HepG2 (cell line): ENCODE measurements at regions of chr7 and their contacts with region 1.

Region 1: DNA sequence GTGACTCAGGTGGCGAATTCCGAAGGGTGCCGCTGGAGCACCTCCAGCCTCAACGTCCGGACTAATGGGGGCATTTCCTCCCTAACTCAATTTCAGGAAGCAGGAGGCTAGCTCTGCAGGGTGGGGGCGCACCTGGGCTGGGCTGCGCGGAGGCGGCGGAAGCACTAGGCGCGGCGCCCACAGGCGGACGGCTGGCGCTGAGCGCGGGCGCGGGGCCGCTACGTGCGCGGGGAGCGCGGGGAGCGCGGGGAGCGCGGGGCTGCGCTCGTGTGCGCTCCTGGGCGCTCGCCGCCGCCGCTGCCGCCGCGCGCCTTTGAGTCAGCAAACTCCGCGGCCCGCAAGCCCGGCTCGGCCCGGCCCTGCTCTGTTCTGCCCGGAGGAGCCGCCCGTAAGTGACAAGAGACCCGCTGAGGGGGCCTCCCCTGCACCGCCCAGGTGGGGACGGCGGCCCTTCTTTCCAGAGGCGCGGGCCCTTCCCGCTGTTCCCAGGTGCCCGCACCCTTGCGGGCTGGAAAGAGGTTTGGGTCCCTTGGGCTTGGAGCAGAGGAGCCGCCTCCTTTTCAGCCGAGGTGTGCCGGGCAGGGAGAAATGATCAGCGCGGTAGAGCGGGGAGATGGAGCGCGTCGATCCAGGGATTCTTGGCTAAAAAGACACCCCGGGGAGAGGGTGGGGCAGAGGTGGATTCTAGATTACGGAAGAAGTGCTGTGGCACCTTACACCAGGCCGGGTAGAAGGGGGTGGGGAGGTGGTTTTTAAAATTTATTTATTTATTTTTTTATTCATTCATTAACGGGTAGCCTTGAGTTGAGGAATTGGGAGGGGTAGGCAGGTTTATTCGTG is at the start of gene SNX10:
- DNase-seq: peak; percentile 59
- ATAC-seq: peak; percentile 95
- H3K4me3 ChIP-seq: peak within 1 kb of the TSS; percentile 90 to 96 (median 94)
- H3K27ac ChIP-seq: peak within 1 kb of the TSS; percentile 77
- H3K4me1 ChIP-seq: peaks cover 26% of the 10 kb centered on the region
- H3K27me3 ChIP-seq: peaks cover 0 to 3% of the 10 kb centered on the region in 2 experiments; a peak in 2 of 5 replicates
- CTCF ChIP-seq: peak; percentile 86
- EP300 ChIP-seq: no peak
- POLR2A ChIP-seq: no peak; a peak in 1 of 4 replicates
- RAD21 ChIP-seq: peak; percentile 79
- total RNA-seq, gene SNX10: 26.0 and 43.1 TPM in 2 replicates

Region 2: DNA sequence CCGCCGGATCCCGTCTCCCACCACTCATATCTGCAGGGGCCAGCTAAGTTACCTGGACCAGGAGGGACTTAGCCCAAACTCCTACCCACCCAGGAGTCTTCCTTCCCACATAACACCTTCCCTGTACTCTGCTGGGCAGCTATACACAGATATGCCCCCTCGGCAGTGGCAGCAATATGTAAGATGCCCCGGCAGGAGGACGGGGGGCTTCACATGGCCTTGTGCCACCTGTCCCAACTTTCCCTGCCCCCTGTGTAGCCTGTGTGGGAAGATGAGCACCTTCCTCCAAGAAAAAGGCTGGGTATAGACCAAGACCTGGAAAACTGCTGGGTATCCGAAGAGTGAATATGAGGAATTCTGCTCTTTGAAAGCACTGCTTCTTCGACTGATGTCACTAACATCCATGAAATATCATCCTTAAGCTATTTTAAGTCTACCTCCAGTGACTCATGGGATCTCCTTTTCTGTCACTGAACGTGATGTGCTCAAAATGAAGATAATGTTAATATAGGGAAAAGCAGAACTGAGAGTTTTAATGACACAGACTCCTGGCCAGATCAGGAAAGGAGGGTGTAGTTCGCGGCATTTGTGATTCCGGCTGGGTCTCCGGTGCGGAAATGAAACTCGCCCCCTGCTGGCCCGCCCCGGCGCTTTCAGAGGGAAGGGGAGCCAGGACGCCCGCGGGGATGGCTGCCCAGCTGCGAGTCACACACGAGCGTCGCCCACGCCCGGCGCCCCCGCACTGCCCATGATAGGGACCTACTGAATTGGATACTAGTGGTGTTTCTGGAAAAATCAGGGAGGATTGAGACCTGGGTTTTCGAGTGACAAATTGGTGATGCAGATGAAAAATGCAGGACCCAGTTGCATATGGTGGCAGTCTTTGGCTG is 396.8 kb before region 1 on chr7:
- CTCF ChIA-PET with region 1: no interaction called
- POLR2A ChIA-PET with region 1: no interaction called
- in situ Hi-C with region 1: loop called (anchors 25 kb)
- intact Hi-C with region 1: no loop called
- DNase-seq: no peak
- ATAC-seq: peak; percentile 76
- H3K4me3 ChIP-seq: no peak overlapping the region; a peak in 1 of 6 replicates
- H3K27ac ChIP-seq: no peak overlapping the region
- H3K4me1 ChIP-seq: peaks cover 21% of the 10 kb centered on the region
- H3K27me3 ChIP-seq: peaks cover 0 to under 1% of the 10 kb centered on the region in 2 experiments; a peak in 1 of 5 replicates
- CTCF ChIP-seq: peak; percentile 60
- EP300 ChIP-seq: no peak
- POLR2A ChIP-seq: no peak
- RAD21 ChIP-seq: 0 out of 2 replicates have a peak, but pooled peaks have one; percentile 10

Region 3: GRCh38 chr7:26305463-26306273 is 13.7 kb after region 1 on chr7:
- CTCF ChIA-PET with region 1: no interaction called
- POLR2A ChIA-PET with region 1: interaction called, 33 read pairs
- in situ Hi-C with region 1: no loop called
- intact Hi-C with region 1: no loop called
- DNase-seq: peak; percentile 83
- ATAC-seq: peak; percentile 79
- H3K4me3 ChIP-seq: peak overlapping the region in 2 of 3 experiments; percentile 15 to 22; a peak in 4 of 6 replicates
- H3K27ac ChIP-seq: peak overlapping the region; percentile 72
- H3K4me1 ChIP-seq: peaks cover 55% of the 10 kb centered on the region
- H3K27me3 ChIP-seq: no peaks in the 10 kb centered on the region
- CTCF ChIP-seq: no peak
- EP300 ChIP-seq: peak in 1 of 2 experiments; percentile 68; a peak in 1 of 4 replicates
- POLR2A ChIP-seq: peak in 1 of 2 experiments; percentile 35; a peak in 1 of 4 replicates
- RAD21 ChIP-seq: no peak

Region 4: GRCh38 chr7:26329520-26330255 is 37.8 kb after region 1 on chr7:
- CTCF ChIA-PET with region 1: no interaction called
- POLR2A ChIA-PET with region 1: no interaction called
- in situ Hi-C with region 1: no loop called
- intact Hi-C with region 1: no loop called
- DNase-seq: no peak
- ATAC-seq: no peak
- H3K4me3 ChIP-seq: no peak overlapping the region
- H3K27ac ChIP-seq: no peak overlapping the region
- H3K4me1 ChIP-seq: peaks cover 10% of the 10 kb centered on the region; the same call in 1 of the 2 replicates
- H3K27me3 ChIP-seq: no peaks in the 10 kb centered on the region
- CTCF ChIP-seq: no peak
- EP300 ChIP-seq: no peak
- POLR2A ChIP-seq: no peak
- RAD21 ChIP-seq: no peak

Region 5: DNA sequence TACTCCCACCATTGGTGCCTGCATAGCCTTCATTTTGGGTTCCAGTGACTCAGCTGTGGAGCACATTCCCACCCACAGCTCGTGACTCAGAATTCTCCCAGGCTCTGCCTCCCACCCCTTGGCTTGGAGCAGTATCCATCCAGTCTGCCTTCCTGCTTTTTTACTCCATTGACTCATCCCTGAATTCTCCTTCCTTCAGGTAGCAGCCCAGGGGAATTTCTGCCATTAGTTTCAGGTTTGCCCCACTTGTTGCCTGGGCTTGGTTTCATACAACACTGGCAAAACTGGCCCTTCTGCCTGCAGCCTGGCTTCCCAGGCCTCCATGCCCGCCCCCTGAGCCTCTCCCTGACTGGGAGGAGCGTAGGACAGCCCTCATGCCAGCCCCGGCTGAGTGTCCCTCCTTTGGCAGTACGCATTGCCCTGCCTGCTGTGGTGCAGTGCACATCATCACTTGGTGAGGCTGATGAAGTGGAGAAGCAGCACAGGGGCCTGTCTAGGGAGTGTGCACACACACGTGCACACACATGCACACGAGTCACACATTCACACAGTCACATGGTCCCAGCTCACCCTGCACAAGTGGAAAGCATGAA is 54.8 kb after region 1 on chr7:
- CTCF ChIA-PET with region 1: no interaction called
- POLR2A ChIA-PET with region 1: interaction called, 5 read pairs
- in situ Hi-C with region 1: no loop called
- intact Hi-C with region 1: loop called (anchors 5 kb)
- DNase-seq: no peak
- ATAC-seq: no peak
- H3K4me3 ChIP-seq: no peak overlapping the region
- H3K27ac ChIP-seq: peak overlapping the region; percentile 27
- H3K4me1 ChIP-seq: peaks cover 71% of the 10 kb centered on the region
- H3K27me3 ChIP-seq: no peaks in the 10 kb centered on the region; a peak in 1 of 5 replicates
- CTCF ChIP-seq: no peak
- EP300 ChIP-seq: no peak
- POLR2A ChIP-seq: no peak
- RAD21 ChIP-seq: no peak